Prostate gland (tissue), 2 donors: ENCODE measurements at regions of chr18 and their contacts with region 1.

Region 1: GRCh38 chr18:6885992-6886796 is 156.7 kb downstream of the ARHGAP28 start:
- DNase-seq: peak; percentile 50
- H3K4me3 ChIP-seq: no peak overlapping the region
- H3K27ac ChIP-seq: no peak overlapping the region
- H3K4me1 ChIP-seq: no peaks in the 10 kb centered on the region
- H3K27me3 ChIP-seq: no peaks in the 10 kb centered on the region
- CTCF ChIP-seq: peak; percentile 61 to 75 (median 72)
- POLR2A ChIP-seq: no peak

Region 2: GRCh38 chr18:5879479-5879882 is 1006.7 kb before region 1 on chr18:
- intact Hi-C with region 1: loop called (anchors 10 kb)
- DNase-seq: no peak
- H3K4me3 ChIP-seq: no peak overlapping the region
- H3K27ac ChIP-seq: no peak overlapping the region
- H3K4me1 ChIP-seq: no peaks in the 10 kb centered on the region
- H3K27me3 ChIP-seq: no peaks in the 10 kb centered on the region
- CTCF ChIP-seq: peak; percentile 16 to 71 (median 64)
- POLR2A ChIP-seq: no peak

Region 3: GRCh38 chr18:6543330-6543908 is 342.8 kb before region 1 on chr18:
- intact Hi-C with region 1: loop called (anchors 2 kb)
- DNase-seq: no peak
- H3K4me3 ChIP-seq: no peak overlapping the region
- H3K27ac ChIP-seq: no peak overlapping the region
- H3K4me1 ChIP-seq: no peaks in the 10 kb centered on the region
- H3K27me3 ChIP-seq: no peaks in the 10 kb centered on the region
- CTCF ChIP-seq: peak in 3 of 4 experiments; percentile 59 to 66 (median 65)
- POLR2A ChIP-seq: no peak

Region 4: DNA sequence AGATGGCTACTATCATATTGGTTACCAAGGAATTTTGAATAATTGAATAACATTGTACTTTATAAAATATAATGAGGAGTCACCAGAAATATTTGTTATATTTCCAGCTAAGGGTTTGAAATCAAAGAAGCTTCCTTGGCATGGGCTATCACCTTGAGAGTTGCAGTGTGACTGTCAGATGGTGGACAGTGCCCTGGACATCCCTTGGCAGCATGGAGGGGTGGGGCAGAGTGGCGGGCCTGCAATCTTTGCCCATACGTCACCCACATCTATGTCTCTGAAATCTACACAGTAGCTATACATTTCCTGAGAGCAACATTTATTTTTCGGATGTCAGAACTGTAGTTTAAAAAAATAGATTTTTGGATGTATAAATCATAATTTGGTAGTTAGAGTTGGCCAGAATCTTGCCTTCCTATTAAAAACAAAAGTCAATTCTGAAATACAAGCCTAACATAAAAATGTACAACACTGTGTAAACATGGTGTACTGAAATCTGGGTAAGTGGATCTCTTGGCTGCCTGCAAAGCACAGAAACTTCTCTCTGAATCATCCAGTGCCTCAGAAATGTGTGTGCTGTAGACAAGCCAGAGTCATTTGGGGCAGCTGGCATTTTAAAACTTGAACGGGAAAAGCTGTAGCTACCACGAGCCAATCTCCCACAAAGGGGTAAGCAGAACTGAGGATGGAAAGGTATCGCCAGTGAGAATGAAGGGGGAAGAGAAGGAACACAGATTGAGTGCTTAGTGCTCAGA is 280.9 kb before region 1 on chr18:
- intact Hi-C with region 1: loop called (anchors 5 kb)
- DNase-seq: peak; percentile 52
- H3K4me3 ChIP-seq: no peak overlapping the region
- H3K27ac ChIP-seq: peak overlapping the region; percentile 54 to 67
- H3K4me1 ChIP-seq: peaks cover 6% of the 10 kb centered on the region
- H3K27me3 ChIP-seq: no peaks in the 10 kb centered on the region
- CTCF ChIP-seq: no peak
- POLR2A ChIP-seq: no peak